ENCODE measurements at regions of chr16 and their contacts with region 1.

Region 1: GRCh38 chr16:21277927-21278706 is at the start of gene CRYM:
- DNase-seq: peak; percentile 83
- ATAC-seq: peak; percentile 95
- H3K4me3 ChIP-seq: peak within 1 kb of the TSS in 4 of 5 experiments; percentile 46 to 68 (median 56)
- H3K4me3 Mint-ChIP-seq: peak within 1 kb of the TSS; percentile 87
- H3K27ac ChIP-seq: no peak within 1 kb of the TSS
- H3K27ac Mint-ChIP-seq: no peak within 1 kb of the TSS
- H3K4me1 ChIP-seq: peaks cover 34 to 36% of the 10 kb centered on the region in 2 donors
- H3K4me1 Mint-ChIP-seq: peaks cover 39% of the 10 kb centered on the region
- H3K27me3 ChIP-seq: peaks cover 0 to 17% (median 5%) of the 10 kb centered on the region in 4 experiments
- H3K27me3 Mint-ChIP-seq: peaks cover 17% of the 10 kb centered on the region
- CTCF ChIP-seq: peak; percentile 94
- total RNA-seq, gene CRYM: 5.1 and 8.2 TPM in 2 replicates

Region 2: DNA sequence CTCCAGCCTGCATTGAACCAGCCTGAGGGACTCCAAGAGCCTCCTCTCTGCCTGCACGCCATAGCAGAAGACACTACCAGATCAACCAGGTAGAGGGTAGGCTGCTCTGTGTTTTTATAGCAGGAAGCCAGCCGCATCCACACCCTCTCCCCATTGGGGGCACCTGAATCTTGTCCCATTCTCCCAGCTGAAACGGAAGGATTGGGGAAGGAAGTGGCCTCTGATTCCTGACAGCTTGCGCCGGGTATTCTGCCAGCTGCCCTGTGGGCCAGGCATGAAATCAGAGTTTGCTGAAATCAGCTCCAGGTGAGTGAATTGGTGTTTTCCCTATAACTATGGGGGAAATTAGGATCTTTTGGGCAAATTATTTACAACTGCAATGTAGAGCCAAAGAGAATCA is 66.6 kb before region 1 on chr16 and contains the start of gene ZP2:
- CTCF ChIA-PET with region 1: no interaction called
- POLR2A ChIA-PET with region 1: no interaction called
- intact Hi-C with region 1: no loop called
- DNase-seq: no peak
- ATAC-seq: no peak
- H3K4me3 ChIP-seq: no peak within 1 kb of the TSS
- H3K4me3 Mint-ChIP-seq: no peak within 1 kb of the TSS
- H3K27ac ChIP-seq: no peak within 1 kb of the TSS
- H3K27ac Mint-ChIP-seq: no peak within 1 kb of the TSS
- H3K4me1 ChIP-seq: no peaks in the 10 kb centered on the region
- H3K4me1 Mint-ChIP-seq: no peaks in the 10 kb centered on the region
- H3K27me3 ChIP-seq: peaks cover 0 to 11% (median 4%) of the 10 kb centered on the region in 4 experiments
- H3K27me3 Mint-ChIP-seq: peaks cover 42% of the 10 kb centered on the region
- CTCF ChIP-seq: no peak
- total RNA-seq, gene ZP2: not detected in 2 replicates

Region 3: GRCh38 chr16:21263640-21264570 is 14.2 kb before region 1 on chr16:
- CTCF ChIA-PET with region 1: interaction called, 28 read pairs
- POLR2A ChIA-PET with region 1: interaction called, 4 read pairs
- intact Hi-C with region 1: no loop called
- DNase-seq: peak; percentile 61
- ATAC-seq: peak; percentile 86
- H3K4me3 ChIP-seq: no peak overlapping the region
- H3K4me3 Mint-ChIP-seq: peak overlapping the region; percentile 21
- H3K27ac ChIP-seq: no peak overlapping the region
- H3K27ac Mint-ChIP-seq: peak overlapping the region; percentile 58
- H3K4me1 ChIP-seq: peaks cover 30 to 32% of the 10 kb centered on the region in 2 donors
- H3K4me1 Mint-ChIP-seq: peaks cover 40% of the 10 kb centered on the region
- H3K27me3 ChIP-seq: peaks cover 0 to 6% (median 3%) of the 10 kb centered on the region in 4 experiments
- H3K27me3 Mint-ChIP-seq: peaks cover 6% of the 10 kb centered on the region
- CTCF ChIP-seq: no peak

Region 4: GRCh38 chr16:21300309-21301167 is 22.4 kb after region 1 on chr16:
- CTCF ChIA-PET with region 1: interaction called, 13 read pairs
- POLR2A ChIA-PET with region 1: interaction called, 8 read pairs
- intact Hi-C with region 1: loop called (anchors 1 kb)
- DNase-seq: peak; percentile 69
- ATAC-seq: peak; percentile 43
- H3K4me3 ChIP-seq: peak overlapping the region; percentile 51 to 85 (median 65)
- H3K4me3 Mint-ChIP-seq: peak overlapping the region; percentile 97
- H3K27ac ChIP-seq: no peak overlapping the region
- H3K27ac Mint-ChIP-seq: peak overlapping the region; percentile 86
- H3K4me1 ChIP-seq: peaks cover 12 to 26% of the 10 kb centered on the region in 2 donors
- H3K4me1 Mint-ChIP-seq: peaks cover 28% of the 10 kb centered on the region
- H3K27me3 ChIP-seq: no peaks in the 10 kb centered on the region
- H3K27me3 Mint-ChIP-seq: no peaks in the 10 kb centered on the region
- CTCF ChIP-seq: no peak